CD4-positive, alpha-beta T cell (primary cell): ENCODE measurements at regions of chr4 and their contacts with region 1.

Region 1: GRCh38 chr4:40418430-40419230 is 83.5 kb downstream of the CHRNA9 start:
- DNase-seq: no peak
- ATAC-seq: no peak
- H3K4me3 ChIP-seq: no peak overlapping the region
- H3K4me3 Mint-ChIP-seq: no peak overlapping the region
- H3K27ac ChIP-seq: no peak overlapping the region
- H3K27ac Mint-ChIP-seq: no peak overlapping the region
- H3K4me1 ChIP-seq: no peaks in the 10 kb centered on the region
- H3K4me1 Mint-ChIP-seq: no peaks in the 10 kb centered on the region
- H3K27me3 ChIP-seq: no peaks in the 10 kb centered on the region
- H3K27me3 Mint-ChIP-seq: no peaks in the 10 kb centered on the region
- CTCF ChIP-seq: no peak

Region 2: DNA sequence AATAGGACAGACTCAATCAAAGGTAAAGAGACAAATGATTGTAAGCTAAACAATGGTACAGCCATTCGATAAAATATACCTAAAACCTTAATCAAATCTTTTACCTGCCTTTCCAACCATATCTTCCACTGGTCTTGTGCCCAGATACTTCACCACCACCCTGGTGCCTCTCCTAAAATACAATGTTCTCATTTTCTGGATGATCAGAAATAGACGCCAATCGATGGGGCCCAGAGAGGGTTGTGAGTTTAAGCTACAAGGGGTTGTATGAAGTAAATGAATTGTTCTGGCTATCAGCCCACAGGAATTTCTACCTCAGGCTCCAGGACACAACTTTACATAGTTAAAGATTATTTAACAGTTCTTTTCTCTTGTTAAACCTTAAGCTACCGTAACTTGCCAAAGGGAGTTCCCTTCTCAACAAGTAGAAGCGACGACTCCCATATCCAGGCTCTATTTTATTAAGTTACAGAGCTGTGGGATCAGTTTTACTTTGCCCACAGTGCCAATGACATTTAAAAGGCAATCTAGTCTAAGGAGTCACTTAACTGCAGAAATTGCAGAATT is 15.6 kb after region 1 on chr4:
- CTCF ChIA-PET with region 1: no interaction called
- POLR2A ChIA-PET with region 1: no interaction called
- intact Hi-C with region 1: no loop called
- DNase-seq: no peak
- ATAC-seq: no peak
- H3K4me3 ChIP-seq: no peak overlapping the region
- H3K4me3 Mint-ChIP-seq: no peak overlapping the region
- H3K27ac ChIP-seq: no peak overlapping the region
- H3K27ac Mint-ChIP-seq: peak overlapping the region; percentile 84
- H3K4me1 ChIP-seq: peaks cover 18% of the 10 kb centered on the region
- H3K4me1 Mint-ChIP-seq: peaks cover 22% of the 10 kb centered on the region
- H3K27me3 ChIP-seq: no peaks in the 10 kb centered on the region
- H3K27me3 Mint-ChIP-seq: no peaks in the 10 kb centered on the region
- CTCF ChIP-seq: no peak

Region 3: GRCh38 chr4:40890764-40891163 is 472.1 kb after region 1 on chr4:
- CTCF ChIA-PET with region 1: no interaction called
- POLR2A ChIA-PET with region 1: no interaction called
- intact Hi-C with region 1: loop called in 1 of 2 experiments (anchors 5 kb)
- DNase-seq: no peak
- ATAC-seq: no peak
- H3K4me3 ChIP-seq: no peak overlapping the region
- H3K4me3 Mint-ChIP-seq: no peak overlapping the region
- H3K27ac ChIP-seq: no peak overlapping the region
- H3K27ac Mint-ChIP-seq: no peak overlapping the region
- H3K4me1 ChIP-seq: no peaks in the 10 kb centered on the region
- H3K4me1 Mint-ChIP-seq: peaks cover 4% of the 10 kb centered on the region
- H3K27me3 ChIP-seq: no peaks in the 10 kb centered on the region
- H3K27me3 Mint-ChIP-seq: no peaks in the 10 kb centered on the region
- CTCF ChIP-seq: no peak